ENCODE measurements at regions of chr1 and their contacts with region 1.

Region 1: GRCh38 chr1:84506002-84506728 is at the starts of genes GNG5 and SPATA1:
- DNase-seq: peak; percentile 90 to 99 (median 97)

Region 2: DNA sequence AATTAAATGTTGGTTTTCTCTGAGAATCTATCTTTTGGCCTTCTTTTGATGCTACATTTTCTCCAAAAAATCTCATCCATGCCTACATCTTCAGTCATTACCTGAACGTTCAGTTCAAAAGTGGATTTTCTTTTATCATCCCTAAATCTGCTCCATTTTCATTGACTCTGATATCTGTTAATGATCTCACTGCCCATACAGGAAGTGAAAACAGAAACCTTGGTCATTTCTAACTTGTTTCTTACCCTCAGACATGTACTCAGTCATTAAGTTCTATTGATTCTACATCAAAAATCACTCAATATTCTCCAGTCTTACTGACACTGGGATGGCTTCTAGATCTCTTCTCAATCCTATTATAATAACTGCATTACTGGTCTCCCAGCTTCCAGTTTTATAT is 339.4 kb before region 1 on chr1:
- intact Hi-C with region 1: loop called (anchors 10 kb)
- DNase-seq: no peak

Region 3: DNA sequence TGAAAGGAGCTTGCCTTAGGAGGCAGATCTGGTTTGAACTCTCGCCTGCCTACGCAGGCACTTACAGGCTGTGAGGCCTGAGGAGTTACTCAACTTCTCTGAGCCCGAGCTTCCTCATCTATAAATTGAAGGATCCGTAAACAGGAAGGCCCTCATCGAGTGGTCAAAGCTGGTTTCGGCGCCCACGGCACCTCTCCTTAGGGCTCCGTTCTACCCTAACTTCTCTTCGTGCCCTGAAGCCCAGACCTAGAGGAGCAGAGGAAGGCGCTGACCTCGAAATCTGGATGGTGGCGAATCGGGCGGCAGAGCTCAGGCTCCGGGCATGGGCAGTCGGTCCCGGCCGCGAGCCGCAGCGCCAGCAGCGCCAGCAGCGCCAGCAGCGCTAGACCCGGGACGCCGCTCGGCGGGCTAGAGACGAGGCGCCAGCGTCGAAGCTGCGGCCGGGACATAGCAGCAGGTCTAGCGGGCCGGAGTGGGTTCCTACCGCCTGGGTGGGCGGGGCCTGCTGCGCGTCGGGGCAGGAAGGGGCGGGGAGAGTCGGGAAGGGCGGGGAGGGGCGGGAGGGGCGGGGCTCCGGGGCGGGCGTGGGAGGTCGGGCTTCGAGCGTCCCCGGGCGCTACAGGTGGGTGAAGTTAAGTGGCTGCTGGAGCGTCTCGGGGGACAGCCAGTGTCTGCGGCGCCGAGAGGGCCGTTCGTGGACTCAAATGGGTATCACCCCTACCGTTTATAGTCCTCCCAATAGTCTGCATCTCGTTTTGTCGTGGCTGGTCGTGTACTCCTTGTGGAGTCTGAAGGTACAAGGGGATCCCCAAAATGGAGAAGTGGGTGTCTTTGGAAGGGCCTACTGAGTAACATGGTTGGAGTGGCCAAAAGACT is 68.0 kb after region 1 on chr1 and contains the start of gene CTBS:
- intact Hi-C with region 1: loop called (anchors 5 kb)
- DNase-seq: peak; percentile 55 to 95 (median 87)

Region 4: DNA sequence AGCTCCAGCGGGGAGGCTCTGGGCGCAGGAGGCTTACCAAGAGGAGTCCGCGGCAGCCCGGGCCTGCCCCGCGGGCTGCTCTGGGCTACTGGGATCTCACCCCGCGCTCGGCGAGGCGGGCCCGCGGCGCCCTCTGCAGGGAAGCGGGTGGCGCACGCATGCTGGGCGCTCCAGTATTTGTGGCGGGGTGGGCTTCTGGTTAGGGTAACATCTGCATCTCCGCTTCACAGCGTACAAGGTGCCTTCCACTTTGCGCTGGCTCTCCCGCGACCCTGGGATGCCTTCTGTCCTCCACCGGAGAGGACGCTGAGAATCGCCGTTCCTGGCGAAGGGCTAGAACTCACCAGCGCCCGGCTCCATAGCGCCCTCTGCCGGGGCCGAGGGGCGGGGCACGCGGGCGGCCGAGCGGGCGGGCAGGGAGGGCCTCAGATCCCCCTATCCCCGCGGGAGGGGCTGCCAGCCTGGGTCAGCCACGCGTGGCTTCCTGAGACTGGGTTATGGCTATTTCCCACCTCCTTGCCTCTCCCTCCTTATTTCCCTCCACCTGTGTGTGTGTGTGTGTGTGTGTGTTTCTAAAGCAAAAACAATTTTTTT is 114.7 kb after region 1 on chr1:
- intact Hi-C with region 1: loop called (anchors 5 kb)
- DNase-seq: peak; percentile 37 to 90 (median 79)

Region 5: GRCh38 chr1:84675105-84675504 is 168.9 kb after region 1 on chr1:
- intact Hi-C with region 1: no loop called
- DNase-seq: no peak

Region 6: GRCh38 chr1:84689514-84690396 is 183.6 kb after region 1 on chr1:
- intact Hi-C with region 1: loop called (anchors 5 kb)
- DNase-seq: peak; percentile 45 to 90 (median 73)